Dendritic cell treated with granulocyte-macrophage colony-stimulating factor and Interleukin-4, amounts not matched to agents 40 ng/mL and 50 ng/mL, for 4 days (primary cell): ENCODE measurements at regions of chr3 and their contacts with region 1.

Region 1: GRCh38 chr3:44648564-44649229 is at the start of gene ZNF35:
- H3K4me3 Mint-ChIP-seq: peak within 1 kb of the TSS; percentile 88
- H3K27ac Mint-ChIP-seq: peak within 1 kb of the TSS; percentile 82
- H3K4me1 Mint-ChIP-seq: peaks cover 6% of the 10 kb centered on the region
- H3K27me3 Mint-ChIP-seq: no peaks in the 10 kb centered on the region

Region 2: DNA sequence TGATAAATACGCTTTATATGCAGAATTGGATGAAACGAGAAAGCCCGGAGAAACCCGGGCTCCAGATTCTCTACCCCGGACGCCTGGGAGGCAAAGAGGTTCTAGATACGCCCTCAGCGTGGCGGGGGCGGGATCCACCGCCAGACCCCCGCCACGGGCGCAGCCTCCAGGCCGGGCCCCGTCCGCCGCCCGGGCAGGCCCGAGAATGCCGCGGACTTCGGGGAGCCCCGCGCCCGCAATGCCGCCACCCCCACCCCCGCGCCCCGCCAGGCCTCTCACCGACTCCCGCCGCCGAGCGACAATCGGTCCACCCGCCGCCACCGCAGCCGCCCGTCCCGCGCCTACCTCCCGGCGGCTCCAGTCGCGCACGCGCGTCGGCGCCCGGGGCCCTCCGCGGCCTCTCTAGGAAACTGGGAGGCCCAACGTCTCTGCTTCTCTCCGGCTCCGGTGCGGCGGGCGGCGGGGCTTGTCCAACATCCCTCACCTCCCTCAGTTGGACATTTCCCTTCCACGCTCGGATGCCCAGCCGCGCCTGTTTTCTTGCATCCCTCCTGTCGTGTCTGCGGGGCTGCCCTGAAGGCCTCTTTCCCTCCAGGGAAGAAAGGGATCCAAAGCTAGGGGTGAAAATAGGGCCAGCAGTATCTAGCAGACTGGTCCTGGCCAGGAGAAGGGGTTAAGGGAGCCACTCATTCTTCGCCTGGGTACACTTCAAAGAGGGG is 171.2 kb before region 1 on chr3 and contains the start of gene ZNF445:
- intact Hi-C with region 1: loop called (anchors 10 kb)
- H3K4me3 Mint-ChIP-seq: peak within 1 kb of the TSS; percentile 81
- H3K27ac Mint-ChIP-seq: peak within 1 kb of the TSS; percentile 66
- H3K4me1 Mint-ChIP-seq: peaks cover 11% of the 10 kb centered on the region
- H3K27me3 Mint-ChIP-seq: no peaks in the 10 kb centered on the region

Region 3: GRCh38 chr3:44624749-44625480 is 23.8 kb before region 1 on chr3 and contains the start of gene ZNF197:
- intact Hi-C with region 1: loop called (anchors 1 kb)
- H3K4me3 Mint-ChIP-seq: peak within 1 kb of the TSS; percentile 74
- H3K27ac Mint-ChIP-seq: peak within 1 kb of the TSS; percentile 84
- H3K4me1 Mint-ChIP-seq: peaks cover 9% of the 10 kb centered on the region
- H3K27me3 Mint-ChIP-seq: no peaks in the 10 kb centered on the region

Region 4: GRCh38 chr3:44712455-44713075 is 63.9 kb after region 1 on chr3 and contains the start of gene ZNF502:
- intact Hi-C with region 1: loop called (anchors 1 kb)
- H3K4me3 Mint-ChIP-seq: peak within 1 kb of the TSS; percentile 93
- H3K27ac Mint-ChIP-seq: peak within 1 kb of the TSS; percentile 93
- H3K4me1 Mint-ChIP-seq: peaks cover 7% of the 10 kb centered on the region
- H3K27me3 Mint-ChIP-seq: peaks cover 4% of the 10 kb centered on the region

Region 5: GRCh38 chr3:44734646-44735168 is 86.0 kb after region 1 on chr3:
- intact Hi-C with region 1: loop called (anchors 5 kb)
- H3K4me3 Mint-ChIP-seq: no peak overlapping the region
- H3K27ac Mint-ChIP-seq: no peak overlapping the region
- H3K4me1 Mint-ChIP-seq: peaks cover 6% of the 10 kb centered on the region
- H3K27me3 Mint-ChIP-seq: no peaks in the 10 kb centered on the region

Region 6: GRCh38 chr3:44761424-44762169 is 112.9 kb after region 1 on chr3 and contains the starts of genes KIAA1143 and KIF15:
- intact Hi-C with region 1: loop called (anchors 5 kb)
- H3K4me3 Mint-ChIP-seq: peak within 1 kb of the TSS; percentile 84
- H3K27ac Mint-ChIP-seq: peak within 1 kb of the TSS; percentile 91
- H3K4me1 Mint-ChIP-seq: peaks cover 11% of the 10 kb centered on the region
- H3K27me3 Mint-ChIP-seq: no peaks in the 10 kb centered on the region